Activated CD4-positive, alpha-beta memory T cell treated with anti-CD3 and anti-CD28 coated beads, Interleukin-2, amount 10 ng/mL, durations not matched to agents 7 days and 5 days (primary cell): ENCODE measurements at regions of chr6 and their contacts with region 1.

Region 1: DNA sequence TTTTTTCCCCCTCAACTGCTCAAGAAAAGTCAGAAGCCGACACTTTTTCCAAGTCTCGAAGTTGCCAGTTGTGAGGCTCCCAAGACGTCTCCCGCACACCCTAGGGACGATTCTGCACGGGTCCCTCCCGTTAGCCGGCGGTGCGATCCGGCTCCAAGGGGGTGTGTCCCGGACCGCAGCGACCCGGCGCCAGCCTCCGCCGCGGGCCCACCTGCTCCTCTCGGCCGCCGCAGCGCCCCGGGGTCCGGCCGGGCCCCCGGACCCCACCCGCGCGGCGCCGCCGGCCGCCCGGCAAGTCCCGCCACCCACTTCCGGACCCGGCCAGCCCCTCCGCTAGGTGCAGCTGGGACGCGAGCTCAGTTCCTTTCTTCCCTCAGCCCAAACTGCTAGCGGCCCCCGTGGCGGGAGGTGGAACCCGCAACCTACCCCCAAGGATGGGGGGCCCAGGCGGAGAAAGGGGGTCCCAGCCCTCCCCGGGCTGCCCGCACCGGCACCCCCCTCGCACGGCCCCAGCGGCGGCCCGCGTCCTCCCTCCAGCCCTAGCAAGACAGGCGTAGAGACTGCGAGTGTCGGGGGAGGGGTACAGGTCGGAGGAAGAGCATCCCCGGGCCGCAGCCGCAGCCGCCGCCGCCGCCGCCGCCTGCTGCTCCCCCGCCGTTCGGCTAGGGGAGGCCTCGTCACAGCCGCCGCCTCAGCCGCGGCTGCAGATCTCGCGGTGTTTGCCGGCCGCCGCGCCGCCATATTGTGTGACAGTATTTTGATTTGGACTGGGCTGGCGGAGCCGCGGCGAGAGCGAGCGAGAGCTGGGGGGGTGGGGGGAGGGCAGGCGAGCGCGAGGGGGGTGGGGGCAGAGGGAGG is 485 bp upstream of the TAB2 start:
- DNase-seq: peak; percentile 93
- H3K4me3 Mint-ChIP-seq: peak overlapping the region; percentile 84
- H3K27ac Mint-ChIP-seq: peak overlapping the region; percentile 82
- H3K4me1 Mint-ChIP-seq: peaks cover 27% of the 10 kb centered on the region
- H3K27me3 Mint-ChIP-seq: no peaks in the 10 kb centered on the region

Region 2: GRCh38 chr6:149075616-149076364 is 241.2 kb before region 1 on chr6:
- CTCF ChIA-PET with region 1: interaction called, 4 read pairs
- POLR2A ChIA-PET with region 1: interaction called, 15 read pairs
- DNase-seq: no peak
- H3K4me3 Mint-ChIP-seq: no peak overlapping the region
- H3K27ac Mint-ChIP-seq: peak overlapping the region; percentile 38
- H3K4me1 Mint-ChIP-seq: peaks cover 46% of the 10 kb centered on the region
- H3K27me3 Mint-ChIP-seq: no peaks in the 10 kb centered on the region

Region 3: DNA sequence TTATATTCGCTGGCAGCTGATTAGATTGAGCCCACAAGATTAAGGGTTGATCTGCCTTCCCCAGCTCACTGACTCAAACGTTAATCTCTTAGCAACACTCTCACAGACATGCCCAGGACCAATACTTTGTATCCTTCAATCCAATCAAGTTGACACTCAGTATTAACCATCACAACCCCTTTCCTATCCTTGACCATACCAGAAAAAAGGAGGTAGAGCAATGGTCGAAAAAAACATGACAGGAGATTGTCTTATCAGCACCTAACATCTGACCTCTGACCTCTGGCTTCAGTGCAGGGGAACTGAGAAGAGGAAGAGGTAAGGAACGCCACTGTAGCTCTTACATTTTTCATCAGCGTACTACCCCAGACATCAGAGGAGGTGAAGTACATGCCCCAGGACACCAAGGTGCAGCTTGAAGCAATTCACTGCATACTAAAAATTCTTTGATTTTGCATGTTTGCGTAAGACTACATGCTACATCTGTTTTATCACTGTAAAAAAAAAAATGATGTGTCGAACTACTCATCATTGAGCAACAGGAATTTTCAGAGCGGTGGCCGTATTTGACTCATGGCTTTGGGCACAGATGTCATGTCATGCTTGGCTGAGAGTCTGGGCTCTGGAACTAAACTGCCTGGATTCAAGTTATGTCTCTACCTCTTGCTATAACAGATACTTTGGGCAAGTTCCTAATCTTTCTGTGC is 187.5 kb before region 1 on chr6:
- CTCF ChIA-PET with region 1: no interaction called
- POLR2A ChIA-PET with region 1: interaction called, 47 read pairs
- DNase-seq: no peak
- H3K4me3 Mint-ChIP-seq: no peak overlapping the region
- H3K27ac Mint-ChIP-seq: peak overlapping the region; percentile 91
- H3K4me1 Mint-ChIP-seq: peaks cover 8% of the 10 kb centered on the region
- H3K27me3 Mint-ChIP-seq: no peaks in the 10 kb centered on the region

Region 4: GRCh38 chr6:149147938-149148718 is 168.9 kb before region 1 on chr6:
- CTCF ChIA-PET with region 1: interaction called, 8 read pairs
- POLR2A ChIA-PET with region 1: interaction called, 198 read pairs
- DNase-seq: peak; percentile 50
- H3K4me3 Mint-ChIP-seq: peak overlapping the region; percentile 44
- H3K27ac Mint-ChIP-seq: peak overlapping the region; percentile 91
- H3K4me1 Mint-ChIP-seq: peaks cover 91% of the 10 kb centered on the region
- H3K27me3 Mint-ChIP-seq: no peaks in the 10 kb centered on the region

Region 5: GRCh38 chr6:149211046-149211571 is 105.9 kb before region 1 on chr6:
- CTCF ChIA-PET with region 1: no interaction called
- POLR2A ChIA-PET with region 1: interaction called, 68 read pairs
- DNase-seq: peak; percentile 33
- H3K4me3 Mint-ChIP-seq: peak overlapping the region; percentile 21
- H3K27ac Mint-ChIP-seq: no peak overlapping the region
- H3K4me1 Mint-ChIP-seq: peaks cover 4% of the 10 kb centered on the region
- H3K27me3 Mint-ChIP-seq: no peaks in the 10 kb centered on the region

Region 6: GRCh38 chr6:149335924-149336608 is 19.0 kb after region 1 on chr6:
- CTCF ChIA-PET with region 1: no interaction called
- POLR2A ChIA-PET with region 1: interaction called, 259 read pairs
- DNase-seq: peak; percentile 45
- H3K4me3 Mint-ChIP-seq: peak overlapping the region; percentile 40
- H3K27ac Mint-ChIP-seq: peak overlapping the region; percentile 70
- H3K4me1 Mint-ChIP-seq: peaks cover 86% of the 10 kb centered on the region
- H3K27me3 Mint-ChIP-seq: no peaks in the 10 kb centered on the region